BJ (cell line): ENCODE measurements at regions of chr16 and their contacts with region 1.

Region 1: DNA sequence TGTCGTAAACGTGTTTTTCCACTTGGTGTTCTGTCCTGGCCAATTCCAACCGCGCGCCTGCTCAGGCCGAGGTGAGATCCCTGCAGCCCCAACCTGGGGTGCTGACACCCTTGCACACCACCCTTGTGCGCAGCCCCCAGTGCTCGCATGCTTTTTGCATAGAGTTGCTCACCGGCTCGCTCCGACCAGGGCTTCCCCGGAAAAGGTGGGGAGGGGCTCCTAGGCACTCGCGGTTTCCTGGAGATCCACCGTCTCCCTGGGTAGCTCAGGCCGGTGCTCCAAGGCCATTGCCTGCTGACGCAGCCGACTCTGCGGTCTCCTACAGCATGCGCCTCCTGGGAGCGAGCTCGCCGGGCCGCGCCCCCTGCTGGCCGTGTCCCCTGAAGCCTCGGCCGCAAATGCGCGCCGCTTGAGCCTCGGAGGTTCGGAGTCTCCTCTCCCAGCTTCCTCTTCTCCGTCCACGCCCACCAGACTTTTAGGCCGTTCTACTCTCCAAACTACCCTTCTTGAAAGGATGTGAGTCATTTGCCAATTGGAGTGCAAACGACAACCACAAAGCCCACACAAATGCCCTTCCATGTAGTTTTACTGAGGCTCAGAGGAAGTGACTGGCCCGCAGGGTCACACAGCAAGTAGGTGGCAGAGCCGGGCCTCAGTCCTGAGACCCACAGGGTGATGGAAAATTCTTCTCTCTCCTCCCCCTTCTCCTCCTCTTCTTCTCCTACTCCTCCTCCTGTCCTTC is 7.2 kb upstream of the PDP2 start:
- DNase-seq: peak; percentile 97
- H3K4me3 ChIP-seq: 0 out of 2 replicates have a peak overlapping the region, but pooled peaks have one; percentile 2
- H3K27me3 ChIP-seq: no peaks in the 10 kb centered on the region
- CTCF ChIP-seq: peak; percentile 97

Region 2: GRCh38 chr16:66608241-66609138 is 264.6 kb before region 1 on chr16:
- CTCF ChIA-PET with region 1: interaction called, 26 read pairs
- POLR2A ChIA-PET with region 1: no interaction called
- DNase-seq: peak; percentile 32
- H3K4me3 ChIP-seq: no peak overlapping the region
- H3K27me3 ChIP-seq: no peaks in the 10 kb centered on the region
- CTCF ChIP-seq: peak; percentile 94

Region 3: GRCh38 chr16:66660422-66661209 is 212.5 kb before region 1 on chr16:
- CTCF ChIA-PET with region 1: interaction called, 19 read pairs
- POLR2A ChIA-PET with region 1: no interaction called
- DNase-seq: peak; percentile 85
- H3K4me3 ChIP-seq: no peak overlapping the region
- H3K27me3 ChIP-seq: no peaks in the 10 kb centered on the region
- CTCF ChIP-seq: peak; percentile 58

Region 4: GRCh38 chr16:66824006-66824405 is 49.1 kb before region 1 on chr16:
- CTCF ChIA-PET with region 1: interaction called, 50 read pairs
- POLR2A ChIA-PET with region 1: no interaction called
- DNase-seq: no peak
- H3K4me3 ChIP-seq: no peak overlapping the region
- H3K27me3 ChIP-seq: no peaks in the 10 kb centered on the region
- CTCF ChIP-seq: no peak

Region 5: DNA sequence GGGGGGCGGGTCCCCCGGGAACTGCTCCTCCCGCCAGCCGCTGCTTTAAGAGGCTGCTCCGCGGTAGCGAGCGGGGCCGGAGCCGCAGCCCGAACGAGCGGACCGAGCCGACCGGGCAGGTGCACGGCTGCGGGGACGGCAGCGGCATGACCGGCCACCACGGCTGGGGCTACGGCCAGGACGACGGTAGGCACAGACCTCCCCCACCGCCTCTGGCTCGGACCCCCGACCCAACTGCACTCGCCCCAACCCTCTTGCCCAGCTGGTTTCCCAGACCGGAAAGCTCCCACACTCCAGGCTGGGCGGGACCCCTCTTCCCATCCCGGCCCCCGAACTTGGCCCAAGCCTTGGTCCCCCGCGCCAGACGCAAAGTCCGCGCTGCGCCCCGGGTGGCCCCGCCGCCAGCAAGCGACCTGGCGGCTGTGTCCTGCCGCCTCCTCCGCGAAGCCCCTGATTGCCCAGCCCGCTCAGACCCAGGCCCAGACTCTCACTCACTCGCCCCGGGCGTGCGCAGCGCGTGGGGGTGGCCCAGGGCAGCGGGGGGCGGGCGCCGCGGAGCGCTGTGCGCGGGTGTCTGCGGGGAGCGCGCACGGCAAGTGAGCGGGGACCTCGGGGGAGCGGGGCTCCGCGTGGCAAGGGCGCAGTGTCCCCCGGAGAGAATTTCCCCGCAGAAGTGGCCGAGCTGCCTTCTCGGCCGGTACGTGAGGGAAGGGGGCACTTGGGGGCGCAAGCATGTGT is 28.6 kb before region 1 on chr16 and contains the start of gene CA7:
- CTCF ChIA-PET with region 1: interaction called, 27 read pairs
- POLR2A ChIA-PET with region 1: no interaction called
- DNase-seq: no peak
- H3K4me3 ChIP-seq: peak within 1 kb of the TSS; percentile 30
- H3K27me3 ChIP-seq: peaks cover 44% of the 10 kb centered on the region
- CTCF ChIP-seq: no peak
- polyA plus RNA-seq, gene CA7: not detected in 2 replicates

Region 6: DNA sequence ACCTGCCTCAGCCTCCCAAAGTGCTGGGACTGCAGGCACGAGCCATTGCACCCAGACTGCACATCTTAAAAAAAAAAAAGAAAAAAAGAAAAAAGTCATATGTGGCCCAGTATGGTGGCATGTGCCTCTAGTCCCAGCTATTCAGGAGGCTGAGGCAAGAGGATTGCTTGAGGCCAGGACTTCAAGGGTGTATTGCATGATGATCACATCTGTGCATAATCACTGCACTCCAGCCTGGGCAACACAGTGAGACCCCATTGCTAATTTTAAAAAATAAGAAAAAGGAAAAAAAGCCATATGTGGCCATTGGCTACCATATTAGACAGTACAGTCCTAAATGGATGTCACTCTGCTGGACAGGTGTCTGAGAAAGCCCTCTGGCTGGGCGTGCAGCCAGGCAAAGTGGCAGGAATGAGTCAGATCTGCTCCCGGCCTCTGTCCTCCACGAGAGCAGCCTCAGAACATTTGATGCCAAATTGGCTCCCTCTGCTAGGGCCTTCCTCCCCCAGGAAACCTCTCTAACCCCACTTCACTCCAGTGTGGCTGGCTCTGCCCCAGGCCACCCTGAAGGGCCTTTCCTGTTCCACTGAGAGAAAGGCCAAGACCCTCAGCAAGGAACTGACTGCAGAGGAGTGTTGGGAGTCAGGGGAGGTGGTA is 14.2 kb before region 1 on chr16:
- CTCF ChIA-PET with region 1: interaction called, 28 read pairs
- POLR2A ChIA-PET with region 1: no interaction called
- DNase-seq: peak; percentile 24
- H3K4me3 ChIP-seq: no peak overlapping the region
- H3K27me3 ChIP-seq: no peaks in the 10 kb centered on the region
- CTCF ChIP-seq: no peak